T-cell (primary cell): ENCODE measurements at regions of chr13 and their contacts with region 1.

Region 1: DNA sequence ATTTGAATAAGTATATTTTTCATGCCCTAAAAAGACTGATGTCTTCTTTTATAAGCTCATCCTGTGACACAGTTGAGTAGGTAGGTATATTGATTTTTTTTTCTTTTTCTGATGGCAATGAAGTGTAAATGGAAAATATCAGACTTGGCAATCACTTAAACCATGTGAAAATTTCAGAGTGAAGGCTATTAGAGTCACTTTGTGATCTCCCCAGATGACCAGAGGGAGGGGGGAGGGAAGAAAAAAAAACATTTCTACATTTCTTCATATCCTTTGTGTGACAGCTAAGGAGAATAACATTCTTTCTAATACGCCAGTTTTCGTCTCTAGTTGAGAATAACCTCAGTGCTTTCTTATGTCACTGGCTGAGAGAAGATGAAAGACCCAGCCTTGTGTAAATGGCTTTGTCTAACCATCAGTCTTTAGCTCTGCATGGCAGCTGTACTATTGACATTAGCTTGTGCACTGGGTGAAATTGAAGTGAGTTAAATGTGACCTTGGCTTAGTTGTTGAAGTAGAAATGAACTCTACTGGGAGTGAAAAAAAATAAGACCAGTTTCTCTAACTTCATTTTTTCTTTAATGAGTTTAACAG is 332.1 kb upstream of the DACH1 start:
- DNase-seq: no peak
- ATAC-seq: no peak
- H3K4me3 ChIP-seq: no peak overlapping the region
- H3K4me3 Mint-ChIP-seq: no peak overlapping the region
- H3K27ac ChIP-seq: no peak overlapping the region
- H3K27ac Mint-ChIP-seq: no peak overlapping the region
- H3K4me1 ChIP-seq: no peaks in the 10 kb centered on the region
- H3K4me1 Mint-ChIP-seq: no peaks in the 10 kb centered on the region
- H3K27me3 ChIP-seq: no peaks in the 10 kb centered on the region
- H3K27me3 Mint-ChIP-seq: no peaks in the 10 kb centered on the region

Region 2: DNA sequence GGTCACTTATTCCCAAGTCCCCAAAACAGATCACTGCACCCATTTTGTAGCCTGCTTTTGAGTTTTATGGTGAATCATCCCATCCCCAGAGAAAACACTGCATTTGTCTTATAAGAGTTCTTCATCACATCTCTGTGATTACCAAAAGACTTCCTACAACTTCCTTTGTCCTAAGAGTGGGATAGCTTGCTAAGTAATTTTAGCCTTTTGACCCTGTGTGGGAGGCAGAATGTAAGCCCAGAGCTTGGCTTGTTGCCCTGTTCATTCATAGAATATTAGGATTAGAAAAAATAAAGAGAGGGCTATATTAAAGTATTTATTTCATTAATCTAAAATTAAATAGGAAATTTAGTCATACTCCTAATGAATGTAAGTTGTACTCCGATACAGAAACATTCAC is 315.1 kb after region 1 on chr13:
- CTCF ChIA-PET with region 1: interaction called in 1 of 2 experiments, 11 read pairs
- POLR2A ChIA-PET with region 1: no interaction called
- DNase-seq: no peak
- ATAC-seq: no peak
- H3K4me3 ChIP-seq: no peak overlapping the region
- H3K4me3 Mint-ChIP-seq: no peak overlapping the region
- H3K27ac ChIP-seq: no peak overlapping the region
- H3K27ac Mint-ChIP-seq: no peak overlapping the region
- H3K4me1 ChIP-seq: no peaks in the 10 kb centered on the region
- H3K4me1 Mint-ChIP-seq: no peaks in the 10 kb centered on the region
- H3K27me3 ChIP-seq: peaks cover 0 to 2% of the 10 kb centered on the region in 2 experiments
- H3K27me3 Mint-ChIP-seq: peaks cover 0 to 3% of the 10 kb centered on the region in 2 donors